K562 (cell line): ENCODE measurements at regions of chr11 and their contacts with region 1.

Region 1: DNA sequence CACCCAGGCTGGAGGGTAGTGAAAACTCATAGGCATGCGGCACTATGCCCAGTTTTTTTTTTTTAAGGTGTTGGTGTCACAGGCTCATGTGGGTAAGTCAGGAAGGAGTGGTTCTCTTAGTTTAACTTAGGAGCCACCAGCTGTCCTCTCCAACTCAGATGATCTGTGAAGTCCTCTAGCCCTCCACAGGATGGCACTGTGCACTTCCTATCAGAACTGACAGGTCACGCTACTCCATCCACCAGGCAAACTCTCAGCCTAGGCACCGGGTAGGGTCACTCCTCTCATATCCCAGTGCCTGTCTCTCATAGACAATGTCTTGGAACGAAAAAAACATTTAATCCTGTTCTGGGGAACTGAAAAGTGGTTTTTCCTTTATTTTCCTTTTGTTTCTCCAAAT is 16.5 kb downstream of the NAP1L4 start:
- DNase-seq: peak; percentile 37 to 61 (median 44)
- ATAC-seq: peak; percentile 96
- H3K4me3 ChIP-seq: no peak overlapping the region
- H3K27ac ChIP-seq: no peak overlapping the region
- H3K4me1 ChIP-seq: no peaks in the 10 kb centered on the region
- H3K27me3 ChIP-seq: no peaks in the 10 kb centered on the region
- CTCF ChIP-seq: peak; percentile 57 to 60 (median 58)
- EP300 ChIP-seq: no peak
- POLR2A ChIP-seq: no peak
- RAD21 ChIP-seq: peak; percentile 34 to 42

Region 2: DNA sequence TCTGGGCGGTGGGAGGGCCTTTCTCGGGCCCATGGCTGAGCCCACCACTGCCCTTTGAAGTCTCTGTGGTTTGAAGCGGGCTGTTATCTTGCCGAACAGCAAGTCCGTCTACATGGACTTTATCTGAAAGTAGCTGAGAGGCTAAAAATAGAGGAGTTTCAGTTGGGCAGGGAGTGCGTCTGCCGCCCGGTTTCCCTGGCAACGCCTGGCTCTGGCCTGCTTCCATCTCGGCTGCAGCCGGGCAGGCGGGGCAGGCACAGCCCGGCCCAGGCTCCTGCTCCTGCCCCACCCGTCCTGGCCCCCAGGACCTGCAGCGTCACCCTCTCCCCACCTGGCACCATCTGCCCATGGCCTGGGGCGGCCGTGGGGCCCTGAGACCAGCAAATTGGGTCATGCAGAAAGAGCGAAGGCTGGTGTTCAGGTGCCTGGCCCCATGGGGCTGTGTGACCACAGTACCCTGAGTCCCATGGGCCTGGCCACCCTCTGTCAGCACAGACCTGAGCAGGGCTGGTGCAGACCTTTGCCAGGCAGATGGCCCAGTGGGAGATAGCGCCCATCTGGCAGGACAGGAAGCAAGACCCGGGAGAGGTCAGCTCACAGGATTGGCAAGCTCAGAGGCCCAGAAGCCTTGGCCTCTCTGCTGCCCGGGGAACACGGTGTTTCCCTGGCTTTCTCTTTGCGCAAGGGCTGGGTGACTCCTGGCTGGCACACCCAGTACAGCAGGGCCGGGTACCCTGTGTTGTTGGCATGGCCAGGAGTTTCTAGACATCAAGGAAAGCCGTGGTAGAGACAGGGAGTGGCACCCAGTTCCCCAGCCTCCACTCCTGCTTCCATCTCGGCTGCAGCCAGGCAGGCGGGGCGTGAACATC is 196.7 kb before region 1 on chr11:
- CTCF ChIA-PET with region 1: no interaction called
- POLR2A ChIA-PET with region 1: no interaction called
- in situ Hi-C with region 1: no loop called
- intact Hi-C with region 1: no loop called
- DNase-seq: peak; percentile 85 to 97 (median 89)
- ATAC-seq: peak; percentile 84
- H3K4me3 ChIP-seq: no peak overlapping the region
- H3K27ac ChIP-seq: peak overlapping the region; percentile 87
- H3K4me1 ChIP-seq: peaks cover 64 to 74% of the 10 kb centered on the region in 2 experiments
- H3K27me3 ChIP-seq: no peaks in the 10 kb centered on the region
- CTCF ChIP-seq: no peak
- EP300 ChIP-seq: peak; percentile 97
- POLR2A ChIP-seq: no peak
- RAD21 ChIP-seq: no peak; a peak in 1 of 4 replicates

Region 3: DNA sequence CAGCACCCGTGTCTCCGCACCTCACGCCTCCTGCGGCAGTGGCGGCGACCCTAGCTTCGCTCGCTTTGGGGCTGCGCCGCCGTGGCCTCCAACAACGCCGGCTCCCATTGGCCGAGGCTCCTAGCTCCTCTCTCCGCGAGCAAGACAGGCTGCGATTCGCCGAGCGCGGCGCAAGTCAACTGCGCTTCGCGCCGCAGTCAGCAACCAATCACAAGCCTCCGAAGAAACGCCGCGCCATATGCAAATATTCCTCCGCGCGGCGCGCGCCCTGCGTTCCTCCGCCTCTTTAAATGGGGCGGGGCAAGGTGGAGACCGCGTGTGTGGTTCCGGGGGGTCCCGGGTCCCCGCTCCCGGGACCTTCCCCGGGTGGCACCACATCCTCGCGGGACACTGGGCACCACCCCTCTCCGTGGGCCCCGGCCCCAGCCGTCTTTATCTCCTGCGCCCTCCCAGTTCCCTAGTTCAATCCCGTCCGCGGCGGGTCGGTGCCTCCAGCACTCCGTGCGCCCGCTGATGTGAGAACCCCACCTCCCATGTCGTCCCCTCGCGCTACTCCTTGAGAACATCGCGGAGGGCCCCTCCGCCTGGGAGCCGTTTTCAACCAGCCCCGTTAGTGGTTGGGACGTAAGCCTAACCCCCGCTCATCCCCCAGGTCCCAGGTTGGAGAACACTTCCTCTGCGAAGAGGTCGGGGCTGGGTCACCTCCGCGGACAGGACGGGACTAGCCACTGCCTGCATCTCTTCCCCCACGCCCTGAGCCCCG is 16.8 kb after region 1 on chr11 and contains the start of gene NAP1L4:
- CTCF ChIA-PET with region 1: no interaction called
- POLR2A ChIA-PET with region 1: interaction called, 16 read pairs
- in situ Hi-C with region 1: no loop called
- intact Hi-C with region 1: no loop called
- DNase-seq: peak; percentile 99 to 100 (median 100)
- ATAC-seq: peak; percentile 87
- H3K4me3 ChIP-seq: peak within 1 kb of the TSS; percentile 52
- H3K27ac ChIP-seq: peak within 1 kb of the TSS; percentile 84
- H3K4me1 ChIP-seq: peaks cover 13 to 18% of the 10 kb centered on the region in 2 experiments; a peak in 4 of 5 replicates
- H3K27me3 ChIP-seq: no peaks in the 10 kb centered on the region
- CTCF ChIP-seq: no peak
- EP300 ChIP-seq: no peak
- POLR2A ChIP-seq: peak; percentile 91
- RAD21 ChIP-seq: no peak
- polyA plus RNA-seq, gene NAP1L4: 34.1 to 50.7 TPM